ENCODE measurements at regions of chr2 and their contacts with region 1.

Region 1: DNA sequence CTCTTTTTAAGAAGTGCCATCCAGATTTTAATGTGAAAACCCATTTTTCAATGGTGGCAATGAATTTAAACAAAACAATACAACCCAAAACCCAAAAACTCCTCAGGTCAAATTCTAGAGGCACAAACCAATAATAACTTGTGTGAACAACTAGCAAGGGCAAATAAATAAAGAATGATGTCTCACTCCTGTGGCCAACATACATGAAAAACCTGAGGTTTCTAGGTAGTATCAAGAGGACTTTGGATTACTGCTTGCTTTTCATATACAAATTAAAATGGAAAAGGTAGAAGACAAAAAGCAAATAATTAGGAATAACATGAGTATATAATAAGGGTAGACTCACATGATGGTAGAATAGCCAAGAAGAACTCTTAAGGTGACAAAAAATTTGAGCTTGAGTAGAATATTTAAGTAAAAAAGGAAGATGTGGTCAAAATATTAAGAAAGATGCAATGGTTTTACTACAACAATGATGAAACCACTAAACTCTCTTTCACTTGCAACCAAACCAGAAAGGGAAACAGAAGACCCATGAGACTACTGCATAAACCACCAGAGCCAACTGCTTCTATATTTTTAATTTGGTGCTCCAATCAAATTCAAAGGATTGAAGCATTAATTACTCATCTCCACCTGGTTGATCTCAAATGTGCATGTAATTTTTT is 53.5 kb downstream of the DARS1 start:
- DNase-seq: no peak
- H3K4me3 Mint-ChIP-seq: peak overlapping the region; percentile 24
- H3K27ac Mint-ChIP-seq: no peak overlapping the region
- H3K4me1 Mint-ChIP-seq: peaks cover 32% of the 10 kb centered on the region
- H3K27me3 Mint-ChIP-seq: no peaks in the 10 kb centered on the region

Region 2: DNA sequence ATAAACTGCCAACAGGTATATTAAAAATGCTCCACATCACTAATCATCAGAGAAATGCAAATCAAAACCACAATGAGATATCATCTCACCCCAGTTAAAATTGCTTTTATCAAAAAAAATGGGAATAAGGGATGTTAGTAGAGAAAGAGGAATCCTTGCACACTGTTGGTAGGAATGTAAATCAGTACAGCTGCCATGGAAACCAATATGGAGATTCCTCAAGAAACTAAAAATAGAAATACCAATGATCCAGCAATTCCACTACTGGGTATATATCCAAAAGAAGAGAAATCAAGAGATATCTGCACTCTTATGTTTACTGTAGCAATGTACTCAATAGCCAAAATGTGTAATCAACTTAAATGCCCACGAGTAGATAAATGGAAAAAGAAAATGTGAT is 441.5 kb before region 1 on chr2:
- intact Hi-C with region 1: no loop called
- DNase-seq: no peak
- H3K4me3 Mint-ChIP-seq: no peak overlapping the region
- H3K27ac Mint-ChIP-seq: no peak overlapping the region
- H3K4me1 Mint-ChIP-seq: no peaks in the 10 kb centered on the region
- H3K27me3 Mint-ChIP-seq: no peaks in the 10 kb centered on the region

Region 3: DNA sequence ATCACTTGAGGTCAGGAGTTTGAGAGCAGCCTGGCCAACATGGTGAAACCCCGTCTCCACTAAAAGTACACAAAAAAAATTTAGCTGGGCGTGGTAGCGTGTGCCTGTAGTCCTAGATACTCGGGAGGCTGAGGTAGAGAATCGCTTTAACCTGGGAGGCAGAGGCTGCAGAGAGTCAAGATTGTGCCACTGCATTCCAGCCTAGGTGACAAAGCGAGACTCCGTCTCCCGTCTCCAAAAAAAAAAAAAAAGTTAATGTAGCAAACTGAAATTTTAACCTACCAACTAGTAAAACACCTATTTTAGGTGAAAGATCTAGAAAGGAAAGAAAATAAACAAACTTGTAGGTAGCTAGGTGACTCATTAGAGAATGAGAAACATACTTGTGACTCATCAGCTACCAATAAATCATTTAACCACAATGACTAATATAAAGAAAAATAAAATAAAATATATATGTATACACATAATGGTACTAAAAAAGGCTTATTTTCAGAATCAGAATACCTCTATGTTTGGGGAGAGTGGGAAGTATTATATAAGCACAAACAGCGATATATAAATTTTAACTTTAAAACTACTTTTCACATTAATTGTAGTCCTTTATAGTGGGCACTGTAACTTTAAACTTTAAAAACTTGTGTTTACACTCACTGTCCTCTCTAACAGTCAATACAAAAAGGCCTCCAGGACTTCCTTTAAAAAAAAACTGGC is 16.9 kb after region 1 on chr2:
- intact Hi-C with region 1: loop called (anchors 2 kb)
- DNase-seq: peak; percentile 71
- H3K4me3 Mint-ChIP-seq: peak overlapping the region; percentile 60
- H3K27ac Mint-ChIP-seq: peak overlapping the region; percentile 94
- H3K4me1 Mint-ChIP-seq: peaks cover 51% of the 10 kb centered on the region
- H3K27me3 Mint-ChIP-seq: no peaks in the 10 kb centered on the region

Region 4: GRCh38 chr2:135960656-135961551 is 29.0 kb after region 1 on chr2:
- intact Hi-C with region 1: loop called (anchors 2 kb)
- DNase-seq: peak; percentile 83
- H3K4me3 Mint-ChIP-seq: peak overlapping the region; percentile 58
- H3K27ac Mint-ChIP-seq: peak overlapping the region; percentile 94
- H3K4me1 Mint-ChIP-seq: peaks cover 56% of the 10 kb centered on the region
- H3K27me3 Mint-ChIP-seq: no peaks in the 10 kb centered on the region

Measured in activated CD4-positive, alpha-beta T cell treated with anti-CD3 and anti-CD28 coated beads, Interleukin-2, amount 10 ng/mL, durations not matched to agents 24 days and 14 days (primary cell).